ENCODE measurements at regions of chr11 and their contacts with region 1.

Region 1: GRCh38 chr11:76629853-76630599 is 40.5 kb downstream of the LRRC32 start:
- DNase-seq: peak; percentile 20
- H3K4me3 Mint-ChIP-seq: peak overlapping the region; percentile 8
- H3K27ac Mint-ChIP-seq: peak overlapping the region; percentile 85
- H3K4me1 Mint-ChIP-seq: peaks cover 41% of the 10 kb centered on the region
- H3K27me3 Mint-ChIP-seq: no peaks in the 10 kb centered on the region

Region 2: DNA sequence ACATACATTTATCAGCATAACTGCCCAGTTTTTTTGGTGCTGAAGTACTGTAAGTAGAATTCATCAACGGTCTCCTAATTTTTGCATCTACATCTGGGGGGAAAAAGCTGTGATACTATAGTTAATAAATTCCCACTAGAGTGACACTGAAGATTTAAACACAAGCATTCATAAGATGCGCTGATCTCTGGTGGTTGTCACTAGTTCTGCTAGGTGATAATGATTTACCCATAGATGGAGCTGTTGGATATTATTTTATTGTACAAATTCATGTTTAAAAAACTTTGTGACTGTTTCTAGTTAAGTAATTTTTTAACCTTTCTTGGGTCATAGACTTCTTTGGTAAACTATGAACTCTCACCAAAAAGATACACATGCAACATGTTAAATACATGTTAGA is 78.6 kb before region 1 on chr11:
- CTCF ChIA-PET with region 1: no interaction called
- POLR2A ChIA-PET with region 1: interaction called, 3 read pairs
- intact Hi-C with region 1: loop called (anchors 2 kb)
- DNase-seq: no peak
- H3K4me3 Mint-ChIP-seq: no peak overlapping the region
- H3K27ac Mint-ChIP-seq: no peak overlapping the region
- H3K4me1 Mint-ChIP-seq: peaks cover 13% of the 10 kb centered on the region
- H3K27me3 Mint-ChIP-seq: no peaks in the 10 kb centered on the region

Region 3: DNA sequence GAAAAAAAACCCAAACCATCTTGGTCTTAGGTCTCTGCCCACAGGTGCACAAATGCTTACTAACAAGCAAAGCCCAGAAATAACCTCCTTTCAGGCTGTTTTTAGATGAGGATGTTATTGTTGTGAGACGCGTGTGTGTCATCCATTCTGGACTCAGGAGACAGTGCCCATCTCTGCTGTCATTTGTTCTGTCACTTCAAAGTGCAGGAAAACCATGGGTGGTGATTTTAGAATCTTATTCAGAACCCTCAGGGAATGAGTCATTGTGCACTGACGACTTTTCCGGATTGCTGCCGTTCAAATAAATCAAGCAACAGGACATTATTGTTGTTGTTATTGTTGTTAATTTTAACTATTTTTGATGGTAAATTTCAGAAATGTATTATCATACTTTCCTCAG is 69.8 kb before region 1 on chr11:
- CTCF ChIA-PET with region 1: no interaction called
- POLR2A ChIA-PET with region 1: no interaction called
- intact Hi-C with region 1: loop called (anchors 2 kb)
- DNase-seq: peak; percentile 61
- H3K4me3 Mint-ChIP-seq: no peak overlapping the region
- H3K27ac Mint-ChIP-seq: peak overlapping the region; percentile 74
- H3K4me1 Mint-ChIP-seq: peaks cover 34% of the 10 kb centered on the region
- H3K27me3 Mint-ChIP-seq: peaks cover 16% of the 10 kb centered on the region

Region 4: DNA sequence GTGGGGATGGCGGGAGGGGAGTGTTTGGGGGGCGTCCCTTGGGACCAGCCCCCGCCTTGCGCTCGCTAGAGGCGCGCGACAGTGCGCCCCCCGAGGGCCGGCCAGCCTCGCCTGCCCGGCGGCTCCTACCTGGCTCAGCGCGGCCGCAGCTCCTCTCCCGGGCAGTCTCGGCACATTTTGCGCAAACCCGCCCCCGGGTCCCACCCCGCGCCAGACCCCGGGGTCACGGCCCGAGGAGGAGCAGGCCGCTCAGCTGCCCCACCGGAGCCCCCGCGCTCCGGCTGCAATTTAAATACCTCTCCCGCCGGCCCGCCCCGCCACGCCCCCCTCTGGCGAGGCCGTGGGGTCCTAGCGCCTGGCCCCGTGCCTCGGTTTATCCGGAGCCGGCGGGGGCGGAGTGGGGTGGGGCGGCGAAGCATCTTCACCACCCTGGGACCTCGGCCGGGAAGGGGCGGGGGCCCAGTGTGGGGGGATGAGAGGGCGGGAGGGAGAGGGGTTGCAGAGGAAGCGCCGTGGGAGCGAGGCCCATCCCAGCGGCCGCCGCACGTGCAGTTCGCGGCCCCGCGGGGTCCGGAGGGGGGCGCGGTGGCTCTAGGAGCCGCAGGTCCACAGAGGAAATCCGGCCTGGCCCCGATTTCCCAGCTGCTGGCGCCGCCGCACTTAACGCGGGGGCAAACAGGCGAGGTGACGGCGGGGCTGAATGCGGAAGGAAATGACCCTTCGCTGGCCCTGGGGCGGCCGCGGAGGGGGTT is 40.6 kb after region 1 on chr11 and contains the start of gene LRRC32:
- CTCF ChIA-PET with region 1: no interaction called
- POLR2A ChIA-PET with region 1: no interaction called
- intact Hi-C with region 1: loop called (anchors 1 kb)
- DNase-seq: peak; percentile 35
- H3K4me3 Mint-ChIP-seq: peak within 1 kb of the TSS; percentile 65
- H3K27ac Mint-ChIP-seq: no peak within 1 kb of the TSS
- H3K4me1 Mint-ChIP-seq: peaks cover 28% of the 10 kb centered on the region
- H3K27me3 Mint-ChIP-seq: peaks cover 22% of the 10 kb centered on the region
- total RNA-seq, gene LRRC32: 11.2 to 12.3 TPM

Region 5: GRCh38 chr11:76807206-76807875 is 177.3 kb after region 1 on chr11:
- CTCF ChIA-PET with region 1: no interaction called
- POLR2A ChIA-PET with region 1: no interaction called
- intact Hi-C with region 1: no loop called
- DNase-seq: peak; percentile 81
- H3K4me3 Mint-ChIP-seq: no peak overlapping the region
- H3K27ac Mint-ChIP-seq: no peak overlapping the region
- H3K4me1 Mint-ChIP-seq: peaks cover 32% of the 10 kb centered on the region
- H3K27me3 Mint-ChIP-seq: peaks cover 22% of the 10 kb centered on the region